Heart right ventricle (tissue), 16 donors: ENCODE measurements at regions of chr15 and their contacts with region 1.

Region 1: GRCh38 chr15:54719325-54719724 is 477.4 kb downstream of the RSL24D1 start:
- DNase-seq: no peak
- ATAC-seq: no peak
- H3K4me3 ChIP-seq: no peak overlapping the region
- H3K27ac ChIP-seq: no peak overlapping the region
- H3K4me1 ChIP-seq: no peaks in the 10 kb centered on the region
- H3K27me3 ChIP-seq: no peaks in the 10 kb centered on the region
- CTCF ChIP-seq: no peak

Region 2: DNA sequence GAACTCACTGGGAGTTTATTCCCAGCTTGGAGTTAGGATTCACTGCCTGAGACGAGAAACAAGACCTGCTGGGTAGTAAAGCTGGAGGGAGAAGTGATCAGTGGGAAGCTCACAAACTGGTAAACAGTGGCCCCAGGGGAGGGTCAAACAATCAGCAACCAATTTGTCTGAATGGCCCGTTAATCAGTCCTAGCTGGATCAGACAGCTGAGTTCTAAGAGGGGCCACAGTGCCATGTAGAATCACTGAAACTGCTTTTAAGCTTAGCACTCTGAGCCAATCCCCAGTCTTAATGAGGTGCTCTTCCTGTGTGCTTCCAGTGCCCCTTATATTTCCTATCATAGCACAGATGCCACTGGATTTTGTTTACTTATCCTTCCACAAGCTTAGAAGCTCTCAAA is 114.3 kb before region 1 on chr15:
- intact Hi-C with region 1: no loop called
- DNase-seq: no peak
- ATAC-seq: no peak
- H3K4me3 ChIP-seq: no peak overlapping the region
- H3K27ac ChIP-seq: no peak overlapping the region
- H3K4me1 ChIP-seq: no peaks in the 10 kb centered on the region
- H3K27me3 ChIP-seq: peaks cover 0 to 3% (median 0%) of the 10 kb centered on the region in 7 donors
- CTCF ChIP-seq: no peak

Region 3: DNA sequence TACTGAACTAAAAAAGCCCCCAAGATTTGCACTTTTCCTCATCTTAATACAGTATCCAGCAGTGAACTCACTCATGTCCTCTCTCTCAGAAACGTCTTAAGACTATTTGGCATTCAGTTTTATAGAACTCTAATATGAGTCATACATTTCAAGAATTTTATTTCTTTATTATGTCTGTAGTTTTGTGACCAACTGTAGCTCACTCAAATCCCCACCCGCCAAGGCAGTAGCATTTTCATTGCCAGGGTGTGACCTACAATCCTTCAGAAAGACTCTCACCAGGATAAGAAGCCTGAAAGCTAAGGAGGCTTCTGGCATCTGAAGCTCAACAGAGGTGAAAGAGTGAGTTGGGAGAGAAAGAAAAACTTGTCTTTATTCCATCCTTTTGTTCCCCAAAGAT is 59.7 kb before region 1 on chr15:
- intact Hi-C with region 1: loop called in 1 of 10 experiments (anchors 10 kb)
- DNase-seq: no peak
- ATAC-seq: no peak
- H3K4me3 ChIP-seq: no peak overlapping the region
- H3K27ac ChIP-seq: no peak overlapping the region
- H3K4me1 ChIP-seq: no peaks in the 10 kb centered on the region
- H3K27me3 ChIP-seq: no peaks in the 10 kb centered on the region
- CTCF ChIP-seq: no peak

Region 4: DNA sequence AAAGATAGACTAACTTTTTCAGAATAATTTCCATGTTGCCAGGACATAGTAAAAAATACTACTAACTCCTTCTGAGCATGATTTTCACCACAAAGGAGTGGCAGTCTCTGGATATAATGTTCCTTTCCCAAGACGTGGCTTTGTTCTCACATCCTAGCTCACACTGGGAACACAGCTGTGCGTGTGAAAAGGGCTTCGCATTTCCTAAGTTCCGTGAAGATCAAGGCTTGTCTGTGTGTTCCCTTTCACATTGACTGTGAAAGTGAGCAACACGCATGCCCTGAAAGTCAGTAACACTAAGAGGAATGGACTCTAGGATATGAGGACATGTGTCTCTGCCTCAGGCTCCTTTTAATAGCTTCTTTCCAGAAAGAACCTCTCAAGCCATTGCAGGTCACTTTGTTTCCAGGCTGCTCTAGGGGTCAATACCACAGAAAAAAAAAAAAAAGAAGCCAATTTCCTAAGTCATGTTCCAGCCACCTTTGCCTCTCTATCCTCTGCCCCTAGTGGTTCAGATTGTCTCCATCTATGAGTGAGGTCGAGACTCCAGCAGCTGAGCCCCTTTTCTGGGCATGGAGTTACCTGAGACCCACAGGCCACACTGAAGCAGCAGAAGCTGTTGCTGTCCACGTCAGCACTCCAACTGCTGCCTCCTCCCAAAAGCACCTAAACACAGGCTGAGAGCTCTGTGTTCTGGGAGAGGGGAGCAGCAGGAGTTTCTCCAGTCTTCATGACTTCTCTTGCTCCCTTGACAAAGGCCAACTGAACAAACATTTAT is 121.5 kb after region 1 on chr15:
- intact Hi-C with region 1: no loop called
- DNase-seq: no peak
- ATAC-seq: no peak
- H3K4me3 ChIP-seq: no peak overlapping the region
- H3K27ac ChIP-seq: no peak overlapping the region
- H3K4me1 ChIP-seq: no peaks in the 10 kb centered on the region
- H3K27me3 ChIP-seq: peaks cover 0 to 6% (median 0%) of the 10 kb centered on the region in 7 donors
- CTCF ChIP-seq: no peak